Naive thymus-derived CD4-positive, alpha-beta T cell (primary cell): ENCODE measurements at regions of chr15 and their contacts with region 1.

Region 1: DNA sequence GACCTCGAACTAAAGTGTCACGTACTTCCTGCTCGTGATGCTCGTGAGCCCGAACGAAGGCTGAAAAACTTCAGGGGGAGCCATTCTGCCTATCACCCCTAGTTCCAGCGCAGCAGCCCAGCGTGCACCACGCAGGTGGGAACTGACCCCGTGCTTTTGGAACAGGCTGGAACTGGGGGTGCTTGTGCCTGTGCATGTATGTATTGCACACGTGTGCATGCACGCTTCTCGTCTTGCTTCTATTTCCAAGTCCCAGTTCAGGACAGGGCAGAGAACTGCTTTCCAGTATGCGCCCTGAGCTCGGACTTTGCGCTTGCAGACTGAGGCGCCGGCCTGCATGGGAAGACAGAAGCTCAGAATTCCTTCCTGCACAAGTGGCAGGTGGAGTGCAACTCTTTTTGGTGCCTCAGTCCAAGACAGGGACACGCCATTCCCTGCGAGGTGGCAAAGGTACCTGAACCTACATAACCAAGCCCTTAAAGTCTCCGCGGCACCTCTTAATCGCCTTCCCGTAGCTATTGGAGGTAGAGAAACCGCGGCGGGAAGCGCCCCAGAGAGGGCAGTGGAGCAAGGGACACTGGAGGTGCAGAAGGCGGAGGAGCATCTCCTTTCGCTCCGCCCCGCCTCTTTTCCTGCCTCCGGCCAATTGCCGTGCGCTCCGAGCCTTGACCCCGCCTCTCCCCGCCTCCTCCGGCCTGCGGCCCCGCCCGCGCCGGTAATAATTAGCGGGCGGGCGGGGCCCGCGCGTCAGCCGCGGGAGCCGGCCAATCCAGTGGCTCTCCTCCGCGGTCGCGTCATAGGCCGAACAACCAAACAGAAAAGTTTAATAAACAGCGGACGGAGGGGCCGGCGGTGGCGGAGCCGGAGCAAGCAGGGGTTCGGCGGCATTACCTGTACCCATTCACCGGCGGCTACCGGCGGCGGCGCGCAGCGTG is at the start of gene ZFAND6:
- DNase-seq: peak; percentile 87 to 97 (median 94)
- ATAC-seq: peak; percentile 96
- H3K4me3 ChIP-seq: peak within 1 kb of the TSS; percentile 92
- H3K4me3 Mint-ChIP-seq: peak within 1 kb of the TSS; percentile 89 to 97 (median 94)
- H3K27ac ChIP-seq: peak within 1 kb of the TSS; percentile 83
- H3K27ac Mint-ChIP-seq: peak within 1 kb of the TSS; percentile 89 to 98 (median 94)
- H3K4me1 ChIP-seq: peaks cover 9 to 12% of the 10 kb centered on the region in 2 donors
- H3K4me1 Mint-ChIP-seq: peaks cover 14 to 36% (median 31%) of the 10 kb centered on the region in 7 donors
- H3K27me3 ChIP-seq: no peaks in the 10 kb centered on the region
- H3K27me3 Mint-ChIP-seq: no peaks in the 10 kb centered on the region
- total RNA-seq, gene ZFAND6: 51.0 to 113 (median 65.5) TPM

Region 2: DNA sequence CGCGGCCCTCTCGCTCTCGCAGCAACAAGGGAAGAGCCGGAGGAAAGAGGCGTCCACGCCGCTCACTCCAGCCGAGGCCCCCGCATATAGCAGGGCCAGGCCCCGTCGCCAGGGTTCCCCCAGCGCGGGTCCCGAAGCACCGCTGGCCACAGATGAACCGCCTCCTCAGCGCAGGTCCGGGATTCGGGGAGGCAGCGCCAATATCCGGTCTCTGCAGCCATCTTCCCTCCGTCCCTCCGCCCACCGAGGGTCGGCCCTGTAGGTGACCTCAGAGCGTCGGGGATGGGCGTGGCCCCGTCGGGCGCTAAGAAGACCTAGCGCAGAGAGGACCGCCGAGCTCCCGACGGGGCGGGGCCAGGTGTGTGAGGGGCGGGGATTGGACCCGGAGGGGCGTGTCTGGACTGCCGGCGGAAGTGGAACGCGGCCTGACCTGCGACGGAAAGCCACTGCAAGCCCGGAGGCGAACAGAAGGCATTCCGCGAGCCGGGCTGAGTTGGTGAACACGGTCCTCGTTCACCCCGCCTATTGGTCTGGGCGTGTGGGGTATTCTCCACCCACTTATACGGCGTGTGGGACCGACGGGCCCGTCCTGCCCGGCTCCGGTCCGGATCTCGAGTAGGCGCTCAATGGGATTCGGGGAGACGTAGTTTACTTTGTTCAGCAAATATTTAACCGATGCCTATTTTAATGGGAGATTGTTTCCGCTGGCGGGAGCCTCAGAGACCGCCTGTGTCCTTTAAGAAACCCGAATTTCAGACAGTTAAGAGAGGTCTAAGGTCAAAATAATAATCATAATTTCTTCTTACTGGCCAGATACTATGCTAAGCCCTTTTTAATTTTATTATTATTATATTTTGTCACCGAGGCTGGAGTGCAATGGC is 135.4 kb before region 1 on chr15:
- CTCF ChIA-PET with region 1: no interaction called
- POLR2A ChIA-PET with region 1: interaction called, 21 read pairs
- intact Hi-C with region 1: loop called (anchors 1 kb)
- DNase-seq: peak; percentile 95 to 100 (median 99)
- ATAC-seq: peak; percentile 98
- H3K4me3 ChIP-seq: peak overlapping the region; percentile 98
- H3K4me3 Mint-ChIP-seq: peak overlapping the region; percentile 90 to 98 (median 94)
- H3K27ac ChIP-seq: peak overlapping the region; percentile 96
- H3K27ac Mint-ChIP-seq: peak overlapping the region; percentile 95 to 98 (median 97)
- H3K4me1 ChIP-seq: peaks cover 11 to 14% of the 10 kb centered on the region in 2 donors
- H3K4me1 Mint-ChIP-seq: peaks cover 9 to 30% (median 24%) of the 10 kb centered on the region in 7 donors
- H3K27me3 ChIP-seq: no peaks in the 10 kb centered on the region
- H3K27me3 Mint-ChIP-seq: no peaks in the 10 kb centered on the region

Region 3: DNA sequence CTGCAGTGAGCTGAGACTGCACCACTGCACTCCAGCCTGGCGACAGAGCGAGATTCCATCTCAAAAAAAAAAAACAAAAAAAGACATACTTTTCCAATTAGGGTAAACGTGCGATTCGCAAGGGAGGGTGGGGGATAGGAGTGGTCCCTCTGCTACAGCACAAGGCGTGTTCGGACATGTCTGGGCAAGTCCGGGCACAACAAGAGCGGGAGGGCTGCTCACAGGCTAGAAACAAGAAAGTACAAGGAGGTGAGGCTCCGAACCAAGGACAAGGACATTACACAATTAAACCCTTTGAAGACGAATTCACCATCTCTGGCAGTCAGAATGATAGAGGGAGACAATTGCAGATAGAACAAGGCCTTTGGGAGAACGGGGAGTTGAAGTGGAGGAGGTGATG is 55.9 kb before region 1 on chr15:
- CTCF ChIA-PET with region 1: no interaction called
- POLR2A ChIA-PET with region 1: no interaction called
- intact Hi-C with region 1: no loop called
- DNase-seq: no peak
- ATAC-seq: no peak
- H3K4me3 ChIP-seq: no peak overlapping the region
- H3K4me3 Mint-ChIP-seq: no peak overlapping the region
- H3K27ac ChIP-seq: no peak overlapping the region
- H3K27ac Mint-ChIP-seq: no peak overlapping the region
- H3K4me1 ChIP-seq: no peaks in the 10 kb centered on the region
- H3K4me1 Mint-ChIP-seq: peaks cover 0 to 2% (median 0%) of the 10 kb centered on the region in 7 donors
- H3K27me3 ChIP-seq: no peaks in the 10 kb centered on the region
- H3K27me3 Mint-ChIP-seq: no peaks in the 10 kb centered on the region

Region 4: DNA sequence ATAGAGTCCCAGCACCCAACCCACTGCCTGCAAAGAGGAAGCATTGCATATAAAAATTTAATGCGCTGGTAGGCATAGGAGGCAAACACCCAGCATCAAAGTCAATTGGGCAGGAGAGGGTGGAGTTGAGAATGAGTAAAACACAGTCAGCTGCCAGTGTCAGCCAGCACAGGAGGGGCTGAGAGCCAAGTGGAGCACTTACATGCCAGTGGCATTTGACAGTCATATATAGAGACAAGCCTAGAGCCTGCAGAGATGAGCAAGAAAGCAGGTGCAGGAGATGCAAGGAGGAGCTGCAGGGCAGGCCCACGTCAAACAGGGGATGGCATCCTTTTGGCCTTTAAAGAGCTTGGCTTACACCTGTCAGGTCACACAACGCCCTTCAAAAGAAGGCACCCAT is 27.3 kb before region 1 on chr15:
- CTCF ChIA-PET with region 1: no interaction called
- POLR2A ChIA-PET with region 1: no interaction called
- intact Hi-C with region 1: loop called in 1 of 2 experiments (anchors 1 kb)
- DNase-seq: no peak
- ATAC-seq: no peak
- H3K4me3 ChIP-seq: no peak overlapping the region
- H3K4me3 Mint-ChIP-seq: peak overlapping the region in 1 of 10 donors; percentile 26
- H3K27ac ChIP-seq: no peak overlapping the region
- H3K27ac Mint-ChIP-seq: peak overlapping the region in 3 of 9 donors; percentile 17 to 67 (median 65)
- H3K4me1 ChIP-seq: peaks cover 7 to 17% of the 10 kb centered on the region in 2 donors
- H3K4me1 Mint-ChIP-seq: peaks cover 9 to 36% (median 23%) of the 10 kb centered on the region in 7 donors
- H3K27me3 ChIP-seq: no peaks in the 10 kb centered on the region
- H3K27me3 Mint-ChIP-seq: no peaks in the 10 kb centered on the region

Region 5: GRCh38 chr15:80093854-80094418 is 34.8 kb after region 1 on chr15:
- CTCF ChIA-PET with region 1: interaction called, 7 read pairs
- POLR2A ChIA-PET with region 1: interaction called, 3 read pairs
- intact Hi-C with region 1: loop called in 1 of 2 experiments (anchors 1 kb)
- DNase-seq: no peak
- ATAC-seq: peak; percentile 38
- H3K4me3 ChIP-seq: no peak overlapping the region
- H3K4me3 Mint-ChIP-seq: no peak overlapping the region
- H3K27ac ChIP-seq: no peak overlapping the region
- H3K27ac Mint-ChIP-seq: peak overlapping the region in 1 of 9 donors; percentile 52
- H3K4me1 ChIP-seq: peaks cover 0 to 4% of the 10 kb centered on the region in 2 donors
- H3K4me1 Mint-ChIP-seq: peaks cover 6 to 62% (median 48%) of the 10 kb centered on the region in 7 donors
- H3K27me3 ChIP-seq: no peaks in the 10 kb centered on the region
- H3K27me3 Mint-ChIP-seq: no peaks in the 10 kb centered on the region

Region 6: DNA sequence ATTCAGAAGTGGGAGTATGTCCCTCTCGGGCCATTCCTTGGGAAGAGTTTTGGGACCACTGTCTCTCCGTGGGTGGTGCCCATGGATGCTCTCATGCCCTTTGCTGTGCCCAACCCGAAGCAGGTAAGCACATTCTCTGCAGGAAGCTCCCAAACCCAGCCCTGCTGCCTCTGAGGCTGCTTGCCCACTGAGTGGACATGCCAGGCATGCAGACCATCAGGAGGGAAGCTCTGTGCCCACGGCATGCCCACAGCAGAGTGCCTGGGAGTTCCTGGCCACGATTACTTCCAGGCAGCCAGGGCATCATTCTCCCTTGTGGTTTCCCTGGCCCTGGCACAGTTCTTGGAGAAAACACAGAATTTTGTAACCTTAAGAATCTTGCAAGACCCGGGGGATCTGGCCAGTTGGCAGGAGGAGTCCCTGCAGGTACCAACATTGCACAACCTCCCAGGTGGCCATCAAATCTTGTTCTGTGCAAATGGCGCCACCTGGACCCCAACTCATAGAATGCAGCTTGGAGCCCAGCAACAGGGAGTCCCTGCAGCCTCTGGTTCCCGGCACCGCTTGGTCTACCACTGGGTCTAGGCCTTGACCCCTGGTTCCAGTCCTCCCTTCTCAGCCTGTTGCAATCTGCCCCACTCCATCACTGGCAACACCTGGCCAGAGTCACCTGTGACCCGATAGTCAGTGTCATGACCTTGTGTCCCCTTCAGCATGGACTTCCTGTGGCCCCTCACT is 114.1 kb after region 1 on chr15:
- CTCF ChIA-PET with region 1: no interaction called
- POLR2A ChIA-PET with region 1: no interaction called
- intact Hi-C with region 1: loop called in 1 of 2 experiments (anchors 1 kb)
- DNase-seq: peak; percentile 44 to 71 (median 64)
- ATAC-seq: peak; percentile 84
- H3K4me3 ChIP-seq: no peak overlapping the region
- H3K4me3 Mint-ChIP-seq: peak overlapping the region in 1 of 10 donors; percentile 5
- H3K27ac ChIP-seq: no peak overlapping the region
- H3K27ac Mint-ChIP-seq: peak overlapping the region in 2 of 9 donors; percentile 5 to 55
- H3K4me1 ChIP-seq: no peaks in the 10 kb centered on the region
- H3K4me1 Mint-ChIP-seq: peaks cover 0 to 2% (median 0%) of the 10 kb centered on the region in 7 donors
- H3K27me3 ChIP-seq: no peaks in the 10 kb centered on the region
- H3K27me3 Mint-ChIP-seq: no peaks in the 10 kb centered on the region

Region 7: DNA sequence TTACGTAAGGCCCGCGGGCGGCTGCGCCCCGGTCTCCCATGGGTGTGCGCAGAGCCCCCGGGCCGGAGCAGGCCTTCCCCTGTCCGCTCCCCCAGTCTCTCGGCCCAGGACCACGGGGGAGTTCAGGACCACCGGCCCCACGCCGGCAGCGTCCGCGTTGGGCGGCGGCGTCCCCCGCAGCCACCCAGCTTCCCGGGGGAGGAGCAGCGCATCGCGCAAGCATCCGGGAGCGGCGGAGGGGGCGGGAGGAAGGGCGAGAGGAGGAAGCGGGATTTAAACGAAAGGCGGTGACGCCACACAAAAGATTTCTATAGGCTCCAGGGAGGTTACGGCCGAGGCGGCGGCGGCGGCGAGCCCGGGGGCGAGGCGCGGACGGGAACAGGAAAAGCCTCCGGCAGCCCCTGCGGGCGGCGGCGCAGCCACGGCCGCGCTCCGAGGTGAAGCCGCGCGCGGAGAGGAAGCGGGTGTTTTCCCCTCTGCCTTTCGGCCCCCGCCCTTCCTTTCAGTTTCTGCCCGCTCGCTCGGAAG is 941.6 kb after region 1 on chr15 and contains the start of gene TLNRD1:
- CTCF ChIA-PET with region 1: no interaction called
- POLR2A ChIA-PET with region 1: no interaction called
- intact Hi-C with region 1: loop called in 1 of 2 experiments (anchors 5 kb)
- DNase-seq: peak; percentile 63 to 90 (median 79)
- ATAC-seq: peak; percentile 81
- H3K4me3 ChIP-seq: peak within 1 kb of the TSS; percentile 83
- H3K4me3 Mint-ChIP-seq: peak within 1 kb of the TSS; percentile 91 to 99 (median 96)
- H3K27ac ChIP-seq: peak within 1 kb of the TSS; percentile 91
- H3K27ac Mint-ChIP-seq: peak within 1 kb of the TSS; percentile 94 to 98 (median 97)
- H3K4me1 ChIP-seq: peaks cover 24 to 36% of the 10 kb centered on the region in 2 donors
- H3K4me1 Mint-ChIP-seq: peaks cover 24 to 66% (median 56%) of the 10 kb centered on the region in 7 donors
- H3K27me3 ChIP-seq: no peaks in the 10 kb centered on the region
- H3K27me3 Mint-ChIP-seq: no peaks in the 10 kb centered on the region
- total RNA-seq, gene TLNRD1: 11.5 to 33.0 (median 22.5) TPM

Region 8: DNA sequence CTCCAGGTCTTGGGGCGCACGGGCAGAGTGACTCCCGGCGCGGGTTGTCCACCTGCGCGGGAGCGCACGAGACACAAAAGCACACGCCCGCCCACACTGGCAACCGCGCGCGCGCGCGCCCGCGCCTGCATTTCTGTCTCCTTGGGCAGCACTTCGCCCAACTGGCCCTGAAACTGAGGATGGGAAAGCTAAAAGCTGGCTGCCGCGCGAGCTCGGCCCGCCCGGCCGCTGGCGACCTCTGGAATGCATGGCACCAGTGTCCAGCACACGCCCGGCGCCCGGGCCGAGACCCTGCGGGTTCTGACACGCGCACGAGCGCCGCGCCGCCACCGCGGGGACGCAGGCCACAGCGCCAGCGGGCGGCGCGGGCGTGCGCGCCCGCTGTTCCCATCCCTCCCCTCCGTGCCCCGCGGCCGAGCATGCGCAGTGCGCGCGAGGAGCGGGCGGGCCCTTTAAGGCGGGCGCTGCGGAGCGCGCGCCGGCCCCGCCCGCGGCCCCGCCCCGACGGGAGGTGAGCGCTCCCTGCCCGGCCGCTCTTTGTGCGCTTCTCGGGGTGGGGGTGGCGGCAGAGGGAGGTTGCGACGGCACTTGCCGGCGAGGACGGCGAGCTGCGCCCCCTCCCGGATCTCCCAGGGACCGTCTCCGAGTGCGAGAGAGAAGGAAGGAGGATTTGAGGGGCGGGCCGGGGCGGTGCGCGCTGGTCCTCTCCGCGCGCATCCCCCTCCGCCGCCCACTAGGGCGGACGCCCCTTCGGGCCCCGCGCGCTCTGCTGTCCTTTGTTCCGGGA is 1987.7 kb after region 1 on chr15:
- CTCF ChIA-PET with region 1: no interaction called
- POLR2A ChIA-PET with region 1: no interaction called
- intact Hi-C with region 1: loop called in 1 of 2 experiments (anchors 5 kb)
- DNase-seq: peak; percentile 85 to 93 (median 91)
- ATAC-seq: peak; percentile 86
- H3K4me3 ChIP-seq: peak overlapping the region; percentile 93
- H3K4me3 Mint-ChIP-seq: peak overlapping the region; percentile 88 to 94 (median 91)
- H3K27ac ChIP-seq: peak overlapping the region; percentile 72
- H3K27ac Mint-ChIP-seq: peak overlapping the region in 8 of 9 donors; percentile 31 to 93 (median 82)
- H3K4me1 ChIP-seq: peaks cover 0 to 8% of the 10 kb centered on the region in 2 donors
- H3K4me1 Mint-ChIP-seq: peaks cover 4 to 21% (median 11%) of the 10 kb centered on the region in 7 donors
- H3K27me3 ChIP-seq: no peaks in the 10 kb centered on the region
- H3K27me3 Mint-ChIP-seq: peaks cover 8 to 45% (median 11%) of the 10 kb centered on the region in 5 donors